Activated B cell treated with CpG ODN at 0.5 μM for 24 hours (primary cell): ENCODE measurements at regions of chr1 and their contacts with region 1.

Region 1: GRCh38 chr1:25819576-25820246 is at the start of gene MTFR1L:
- DNase-seq: peak; percentile 93
- ATAC-seq: peak; percentile 92
- H3K4me3 Mint-ChIP-seq: peak within 1 kb of the TSS; percentile 92
- H3K27ac Mint-ChIP-seq: peak within 1 kb of the TSS; percentile 90
- H3K4me1 Mint-ChIP-seq: peaks cover 27% of the 10 kb centered on the region
- H3K27me3 Mint-ChIP-seq: no peaks in the 10 kb centered on the region
- CTCF ChIP-seq: no peak
- total RNA-seq, gene MTFR1L: 34.6 and 35.3 TPM in 2 replicates

Region 2: GRCh38 chr1:25232027-25232865 is 587.5 kb before region 1 on chr1 and contains the start of gene SYF2:
- CTCF ChIA-PET with region 1: no interaction called
- POLR2A ChIA-PET with region 1: interaction called, 11 read pairs
- intact Hi-C with region 1: no loop called
- DNase-seq: peak; percentile 81
- ATAC-seq: peak; percentile 87
- H3K4me3 Mint-ChIP-seq: no peak within 1 kb of the TSS
- H3K27ac Mint-ChIP-seq: no peak within 1 kb of the TSS
- H3K4me1 Mint-ChIP-seq: peaks cover 36% of the 10 kb centered on the region
- H3K27me3 Mint-ChIP-seq: no peaks in the 10 kb centered on the region
- CTCF ChIP-seq: no peak
- total RNA-seq, gene SYF2: 51.1 and 53.9 TPM in 2 replicates

Region 3: DNA sequence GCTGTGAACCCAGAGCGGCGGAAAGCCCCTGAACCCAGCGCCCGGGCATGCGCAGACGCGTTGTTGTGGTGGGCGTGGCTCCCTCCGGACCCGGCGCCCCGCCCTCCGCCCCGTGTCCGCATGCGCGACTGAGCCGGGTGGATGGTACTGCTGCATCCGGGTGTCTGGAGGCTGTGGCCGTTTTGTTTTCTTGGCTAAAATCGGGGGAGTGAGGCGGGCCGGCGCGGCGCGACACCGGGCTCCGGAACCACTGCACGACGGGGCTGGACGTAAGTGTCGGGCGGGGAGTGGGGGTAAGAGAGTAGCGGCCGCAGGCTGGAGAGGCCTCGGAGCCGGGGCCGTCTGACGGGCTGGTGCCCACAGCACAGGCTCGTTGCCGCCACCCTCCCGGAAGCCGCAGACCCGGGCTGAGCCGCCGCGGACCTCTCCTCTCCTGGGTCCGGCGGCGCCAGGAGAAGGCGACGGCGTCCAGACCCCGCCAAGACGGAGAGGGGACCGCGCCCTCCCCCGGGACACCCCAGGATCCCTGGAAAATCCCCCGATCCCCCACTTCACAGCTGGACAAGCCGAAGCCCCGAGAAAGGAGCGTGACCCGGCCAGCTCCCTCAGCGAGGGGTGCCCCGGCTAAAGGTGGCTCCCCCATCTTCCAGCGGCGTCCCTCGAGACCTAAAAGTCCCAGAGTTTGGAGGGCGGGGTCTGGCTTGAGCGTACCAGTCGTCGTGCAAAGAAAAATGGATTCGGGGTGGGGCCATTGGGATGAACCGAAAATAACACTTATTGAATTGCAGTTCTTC is 481.3 kb before region 1 on chr1 and contains the start of gene TMEM50A:
- CTCF ChIA-PET with region 1: no interaction called
- POLR2A ChIA-PET with region 1: no interaction called
- intact Hi-C with region 1: loop called (anchors 2 kb)
- DNase-seq: peak; percentile 89
- ATAC-seq: peak; percentile 79
- H3K4me3 Mint-ChIP-seq: peak within 1 kb of the TSS; percentile 95
- H3K27ac Mint-ChIP-seq: peak within 1 kb of the TSS; percentile 94
- H3K4me1 Mint-ChIP-seq: peaks cover 49% of the 10 kb centered on the region
- H3K27me3 Mint-ChIP-seq: no peaks in the 10 kb centered on the region
- CTCF ChIP-seq: no peak
- total RNA-seq, gene TMEM50A: 61.0 and 63.5 TPM in 2 replicates

Region 4: DNA sequence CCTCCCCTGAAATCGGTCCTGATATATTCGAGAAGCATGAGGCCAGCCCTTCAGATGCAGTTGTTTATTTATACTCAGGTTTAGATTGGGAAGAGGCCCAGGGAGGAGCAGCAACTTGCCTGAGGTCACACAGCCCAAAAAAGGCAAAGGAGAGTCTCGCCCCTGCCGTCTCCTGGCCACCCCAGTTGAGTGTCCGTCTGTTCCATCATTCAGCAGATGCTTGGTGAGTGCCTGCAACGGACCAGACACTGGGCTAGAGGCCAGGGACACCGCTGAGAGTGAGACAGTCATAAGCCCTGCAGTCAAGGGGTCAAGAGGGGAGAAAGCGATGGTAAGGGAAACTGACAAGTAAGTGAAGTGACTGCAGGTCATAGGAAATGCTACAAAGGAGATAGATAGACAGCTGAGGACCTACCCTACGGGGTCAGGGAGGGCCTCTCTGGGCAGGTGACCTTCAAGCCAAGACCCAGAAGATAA is 35.1 kb before region 1 on chr1:
- CTCF ChIA-PET with region 1: no interaction called
- POLR2A ChIA-PET with region 1: no interaction called
- intact Hi-C with region 1: no loop called
- DNase-seq: no peak
- ATAC-seq: no peak
- H3K4me3 Mint-ChIP-seq: no peak overlapping the region
- H3K27ac Mint-ChIP-seq: no peak overlapping the region
- H3K4me1 Mint-ChIP-seq: no peaks in the 10 kb centered on the region
- H3K27me3 Mint-ChIP-seq: no peaks in the 10 kb centered on the region
- CTCF ChIP-seq: no peak

Region 5: GRCh38 chr1:25796811-25797458 is 22.8 kb before region 1 on chr1:
- CTCF ChIA-PET with region 1: interaction called, 3 read pairs
- POLR2A ChIA-PET with region 1: interaction called, 12 read pairs
- intact Hi-C with region 1: loop called (anchors 2 kb)
- DNase-seq: peak; percentile 36
- ATAC-seq: peak; percentile 32
- H3K4me3 Mint-ChIP-seq: peak overlapping the region; percentile 4
- H3K27ac Mint-ChIP-seq: no peak overlapping the region
- H3K4me1 Mint-ChIP-seq: peaks cover 16% of the 10 kb centered on the region
- H3K27me3 Mint-ChIP-seq: no peaks in the 10 kb centered on the region
- CTCF ChIP-seq: no peak

Region 6: DNA sequence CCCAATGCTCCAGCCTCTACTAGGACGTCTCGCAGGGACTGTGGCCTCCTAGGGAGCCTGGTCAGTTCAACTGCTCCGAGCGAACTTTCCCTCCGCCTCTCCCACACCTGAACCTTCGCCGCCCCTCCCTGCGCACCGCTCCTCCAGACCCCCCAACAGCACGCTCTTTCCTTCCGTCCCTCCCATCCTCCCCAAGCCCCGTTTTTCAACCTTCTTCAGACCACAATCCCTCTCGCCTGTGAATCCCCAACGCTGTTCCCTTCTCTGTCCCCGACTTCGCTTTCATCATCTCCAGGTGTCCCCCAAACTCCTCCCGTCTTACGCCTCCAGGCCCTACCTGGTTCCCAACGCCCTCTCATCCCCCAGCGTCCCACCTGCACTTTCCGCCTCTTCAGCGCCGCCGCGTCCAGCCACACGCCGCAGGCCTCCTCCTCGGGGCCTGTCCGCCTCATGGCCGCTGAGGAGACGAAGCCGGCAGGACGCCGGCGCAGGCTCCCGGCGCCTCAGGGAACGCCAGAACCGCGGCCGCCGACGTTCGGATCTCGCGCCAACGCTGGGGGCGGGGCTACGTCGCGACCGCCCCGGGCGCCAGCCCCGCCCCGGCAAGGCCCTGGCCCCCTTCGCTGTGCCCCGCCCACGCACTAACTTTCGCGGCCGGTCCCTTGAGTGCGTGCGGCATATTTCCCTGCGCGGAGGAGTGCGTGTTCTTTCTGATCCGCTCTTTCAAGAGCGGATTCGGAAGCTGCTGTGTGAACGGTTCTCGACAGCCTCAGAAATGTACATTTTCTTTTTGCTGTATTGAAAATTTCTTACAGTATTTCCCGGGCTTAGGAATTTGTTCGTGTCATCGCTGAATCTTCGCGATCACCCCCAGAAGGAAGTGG is 39.4 kb after region 1 on chr1 and contains the start of gene AUNIP:
- CTCF ChIA-PET with region 1: no interaction called
- POLR2A ChIA-PET with region 1: interaction called, 4 read pairs
- intact Hi-C with region 1: loop called (anchors 2 kb)
- DNase-seq: peak; percentile 90
- ATAC-seq: peak; percentile 99
- H3K4me3 Mint-ChIP-seq: peak within 1 kb of the TSS; percentile 91
- H3K27ac Mint-ChIP-seq: peak within 1 kb of the TSS; percentile 94
- H3K4me1 Mint-ChIP-seq: peaks cover 28% of the 10 kb centered on the region
- H3K27me3 Mint-ChIP-seq: no peaks in the 10 kb centered on the region
- CTCF ChIP-seq: no peak
- total RNA-seq, gene AUNIP: 0.42 and 0.64 TPM in 2 replicates

Region 7: DNA sequence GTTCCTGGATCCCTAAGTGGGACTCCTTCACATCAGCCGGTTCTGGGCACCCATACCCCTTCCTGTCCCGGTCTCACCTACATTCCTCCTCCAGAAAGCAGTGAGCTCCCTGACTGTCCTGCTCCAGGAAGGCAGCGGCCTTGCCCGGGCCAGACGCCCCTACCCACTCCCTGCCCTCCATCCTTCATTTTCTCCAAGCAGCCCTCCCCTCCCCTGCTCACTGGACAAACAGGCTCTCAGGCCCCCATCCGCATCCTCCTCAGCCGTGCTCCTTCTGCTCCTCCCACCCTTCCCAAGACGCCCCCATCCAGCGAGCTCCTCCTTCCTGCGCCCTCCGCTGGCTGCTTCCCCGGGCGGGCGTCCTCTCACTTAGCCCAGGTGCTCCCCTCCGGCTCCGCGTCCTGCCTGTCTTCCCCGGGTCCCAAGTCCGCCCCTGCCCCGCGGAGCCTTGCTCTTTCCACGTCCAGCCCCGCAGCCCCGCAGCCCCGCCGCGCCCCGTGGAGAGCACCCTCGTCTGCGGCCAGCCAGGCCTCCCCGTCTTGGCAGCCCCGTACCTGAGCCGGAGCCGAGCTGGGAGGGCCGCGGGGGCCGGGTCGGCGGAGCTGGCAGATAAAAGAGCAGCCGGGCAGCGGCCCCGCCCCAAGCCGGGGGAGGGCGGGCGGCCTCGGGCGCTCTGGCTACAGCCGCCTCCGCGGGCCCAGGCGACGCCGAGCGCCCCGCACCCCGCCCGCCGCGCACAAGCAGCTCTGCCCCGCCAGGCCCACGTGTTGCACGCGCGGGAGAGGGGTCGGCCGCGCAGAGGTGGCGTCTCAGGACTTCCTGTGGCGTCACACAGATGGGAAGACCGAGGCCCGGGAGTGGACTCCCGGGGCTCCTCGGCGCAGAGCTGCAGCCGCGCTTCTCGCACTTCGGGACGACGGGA is 55.5 kb after region 1 on chr1 and contains the start of gene PAQR7:
- CTCF ChIA-PET with region 1: no interaction called
- POLR2A ChIA-PET with region 1: interaction called, 4 read pairs
- intact Hi-C with region 1: loop called (anchors 2 kb)
- DNase-seq: peak; percentile 68
- ATAC-seq: peak; percentile 88
- H3K4me3 Mint-ChIP-seq: peak within 1 kb of the TSS; percentile 84
- H3K27ac Mint-ChIP-seq: peak within 1 kb of the TSS; percentile 56
- H3K4me1 Mint-ChIP-seq: peaks cover 35% of the 10 kb centered on the region
- H3K27me3 Mint-ChIP-seq: no peaks in the 10 kb centered on the region
- CTCF ChIP-seq: no peak
- total RNA-seq, gene PAQR7: 3.7 and 4.6 TPM in 2 replicates

Region 8: DNA sequence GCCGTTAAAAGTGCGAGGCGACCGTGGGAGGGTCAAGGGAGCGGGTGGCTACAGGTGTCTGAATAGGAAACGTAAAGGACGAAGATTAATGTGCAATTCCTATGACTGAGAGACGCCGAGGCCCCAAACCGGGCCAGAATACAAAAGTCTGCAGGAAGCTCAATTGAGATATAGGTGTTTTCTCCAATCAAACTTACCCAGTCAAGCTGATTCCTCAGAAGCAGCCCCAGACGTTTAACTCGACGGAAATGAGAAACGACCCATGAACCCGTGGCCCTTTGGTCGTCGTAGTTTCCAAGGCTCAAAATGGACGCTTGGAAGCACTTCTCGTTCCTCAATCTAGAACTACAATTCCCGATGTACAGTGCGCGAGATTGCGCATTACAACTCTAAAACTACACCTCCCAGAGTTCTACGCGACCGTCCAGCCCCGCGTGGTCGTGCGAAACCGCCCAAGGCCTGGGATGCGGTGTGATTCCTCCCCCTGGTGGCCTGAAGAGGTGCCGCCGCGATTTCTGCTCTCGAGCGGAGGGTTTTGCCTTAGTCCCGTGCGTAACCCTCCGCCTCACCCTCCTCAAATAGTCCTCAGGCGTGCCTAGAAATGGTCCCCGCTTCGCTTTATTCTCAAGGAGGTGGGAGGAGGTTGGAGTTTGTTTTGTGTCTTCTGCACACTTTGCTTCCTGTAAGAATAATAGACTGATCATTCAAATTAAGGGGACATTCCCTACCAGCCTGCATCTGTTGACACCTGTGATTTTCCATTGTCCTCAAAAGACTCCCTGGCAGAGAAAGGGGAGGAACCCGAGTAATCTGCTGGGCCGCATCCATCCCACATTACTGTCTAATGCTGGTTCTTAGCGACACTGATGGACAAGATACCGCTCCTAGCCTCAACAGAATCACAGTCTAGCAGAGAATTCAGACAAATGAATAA is 178.4 kb after region 1 on chr1 and contains the start of gene PAFAH2:
- CTCF ChIA-PET with region 1: no interaction called
- POLR2A ChIA-PET with region 1: interaction called, 13 read pairs
- intact Hi-C with region 1: loop called (anchors 1 kb)
- DNase-seq: peak; percentile 85
- ATAC-seq: peak; percentile 98
- H3K4me3 Mint-ChIP-seq: peak within 1 kb of the TSS; percentile 95
- H3K27ac Mint-ChIP-seq: peak within 1 kb of the TSS; percentile 95
- H3K4me1 Mint-ChIP-seq: peaks cover 18% of the 10 kb centered on the region
- H3K27me3 Mint-ChIP-seq: no peaks in the 10 kb centered on the region
- CTCF ChIP-seq: peak; percentile 89
- total RNA-seq, gene PAFAH2: 5.4 and 9.2 TPM in 2 replicates